ENCODE measurements at regions of chr19 and their contacts with region 1.

Region 1: DNA sequence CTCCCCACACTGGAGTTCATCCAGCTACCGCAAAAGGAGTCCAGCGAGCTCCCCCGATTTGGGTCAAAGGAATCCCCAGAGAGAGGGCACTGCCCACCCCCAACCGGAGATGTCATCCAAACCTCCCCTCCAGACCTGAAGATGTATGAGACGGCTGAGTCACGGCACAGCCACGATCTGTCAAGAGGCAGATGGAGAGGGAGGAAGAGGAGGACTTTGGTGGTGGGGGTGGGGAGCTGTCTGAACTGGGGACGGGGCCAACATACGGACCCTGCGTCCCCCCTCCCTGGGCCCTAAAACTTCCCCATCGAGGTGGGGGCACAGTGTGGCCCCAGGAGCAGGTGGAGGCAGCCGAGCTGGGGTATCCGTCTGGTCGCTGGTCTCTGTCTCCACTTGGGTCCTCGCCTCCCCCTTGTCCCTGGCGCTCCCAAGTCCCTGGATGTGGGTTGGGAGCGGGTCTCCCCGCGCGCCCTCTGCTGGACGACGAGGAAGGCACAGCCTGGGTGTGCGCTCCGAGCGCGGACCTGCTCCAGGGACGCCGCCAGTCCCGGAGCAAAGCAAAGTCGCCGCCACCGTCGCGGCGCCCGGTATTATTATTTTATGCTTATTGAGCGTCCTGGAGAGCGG is 3.8 kb downstream of the PDE4A start:
- DNase-seq: peak; percentile 80 to 93 (median 91)
- ATAC-seq: peak; percentile 88 to 90
- H3K4me3 ChIP-seq: peak overlapping the region; percentile 1
- H3K27ac ChIP-seq: no peak overlapping the region
- H3K4me1 ChIP-seq: peaks cover 4% of the 10 kb centered on the region
- H3K27me3 ChIP-seq: no peaks in the 10 kb centered on the region

Region 2: GRCh38 chr19:9857920-9858746 is 566.0 kb before region 1 on chr19:
- intact Hi-C with region 1: loop called in 1 of 4 experiments (anchors 10 kb)
- DNase-seq: no peak
- ATAC-seq: no peak
- H3K4me3 ChIP-seq: no peak overlapping the region
- H3K27ac ChIP-seq: no peak overlapping the region
- H3K4me1 ChIP-seq: no peaks in the 10 kb centered on the region
- H3K27me3 ChIP-seq: no peaks in the 10 kb centered on the region

Region 3: GRCh38 chr19:10230861-10231611 is 193.1 kb before region 1 on chr19 and contains the start of gene S1PR2:
- intact Hi-C with region 1: no loop called
- DNase-seq: peak; percentile 90 to 95 (median 95)
- ATAC-seq: peak; percentile 73 to 74
- H3K4me3 ChIP-seq: peak within 1 kb of the TSS; percentile 97
- H3K27ac ChIP-seq: peak within 1 kb of the TSS; percentile 87
- H3K4me1 ChIP-seq: peaks cover 4% of the 10 kb centered on the region
- H3K27me3 ChIP-seq: no peaks in the 10 kb centered on the region
- total RNA-seq, gene S1PR2: 4.7 to 18.8 (median 9.5) TPM